Breast epithelium (tissue), 4 donors: ENCODE measurements at regions of chr2 and their contacts with region 1.

Region 1: GRCh38 chr2:64414736-64415435 is 39.1 kb upstream of the LGALSL start:
- DNase-seq: no peak
- H3K4me3 ChIP-seq: no peak overlapping the region
- H3K27ac ChIP-seq: no peak overlapping the region
- H3K4me1 ChIP-seq: no peaks in the 10 kb centered on the region
- H3K27me3 ChIP-seq: no peaks in the 10 kb centered on the region
- CTCF ChIP-seq: no peak
- POLR2A ChIP-seq: no peak

Region 2: GRCh38 chr2:64426183-64426952 is 11.5 kb after region 1 on chr2:
- intact Hi-C with region 1: loop called (anchors 1 kb)
- DNase-seq: no peak
- H3K4me3 ChIP-seq: no peak overlapping the region
- H3K27ac ChIP-seq: no peak overlapping the region
- H3K4me1 ChIP-seq: no peaks in the 10 kb centered on the region
- H3K27me3 ChIP-seq: no peaks in the 10 kb centered on the region
- CTCF ChIP-seq: no peak
- POLR2A ChIP-seq: no peak

Region 3: GRCh38 chr2:64442801-64443429 is 28.0 kb after region 1 on chr2:
- intact Hi-C with region 1: loop called (anchors 1 kb)
- DNase-seq: no peak
- H3K4me3 ChIP-seq: no peak overlapping the region
- H3K27ac ChIP-seq: no peak overlapping the region
- H3K4me1 ChIP-seq: no peaks in the 10 kb centered on the region
- H3K27me3 ChIP-seq: no peaks in the 10 kb centered on the region
- CTCF ChIP-seq: no peak
- POLR2A ChIP-seq: no peak

Region 4: GRCh38 chr2:65228263-65228750 is 813.4 kb after region 1 on chr2:
- intact Hi-C with region 1: no loop called
- DNase-seq: no peak
- H3K4me3 ChIP-seq: peak overlapping the region; percentile 94 to 100 (median 95)
- H3K27ac ChIP-seq: peak overlapping the region; percentile 98 to 99
- H3K4me1 ChIP-seq: peaks cover 0 to 7% of the 10 kb centered on the region in 2 donors
- H3K27me3 ChIP-seq: no peaks in the 10 kb centered on the region
- CTCF ChIP-seq: no peak
- POLR2A ChIP-seq: no peak